Psoas muscle (tissue), 8 donors: ENCODE measurements at regions of chr20 and their contacts with region 1.

Region 1: DNA sequence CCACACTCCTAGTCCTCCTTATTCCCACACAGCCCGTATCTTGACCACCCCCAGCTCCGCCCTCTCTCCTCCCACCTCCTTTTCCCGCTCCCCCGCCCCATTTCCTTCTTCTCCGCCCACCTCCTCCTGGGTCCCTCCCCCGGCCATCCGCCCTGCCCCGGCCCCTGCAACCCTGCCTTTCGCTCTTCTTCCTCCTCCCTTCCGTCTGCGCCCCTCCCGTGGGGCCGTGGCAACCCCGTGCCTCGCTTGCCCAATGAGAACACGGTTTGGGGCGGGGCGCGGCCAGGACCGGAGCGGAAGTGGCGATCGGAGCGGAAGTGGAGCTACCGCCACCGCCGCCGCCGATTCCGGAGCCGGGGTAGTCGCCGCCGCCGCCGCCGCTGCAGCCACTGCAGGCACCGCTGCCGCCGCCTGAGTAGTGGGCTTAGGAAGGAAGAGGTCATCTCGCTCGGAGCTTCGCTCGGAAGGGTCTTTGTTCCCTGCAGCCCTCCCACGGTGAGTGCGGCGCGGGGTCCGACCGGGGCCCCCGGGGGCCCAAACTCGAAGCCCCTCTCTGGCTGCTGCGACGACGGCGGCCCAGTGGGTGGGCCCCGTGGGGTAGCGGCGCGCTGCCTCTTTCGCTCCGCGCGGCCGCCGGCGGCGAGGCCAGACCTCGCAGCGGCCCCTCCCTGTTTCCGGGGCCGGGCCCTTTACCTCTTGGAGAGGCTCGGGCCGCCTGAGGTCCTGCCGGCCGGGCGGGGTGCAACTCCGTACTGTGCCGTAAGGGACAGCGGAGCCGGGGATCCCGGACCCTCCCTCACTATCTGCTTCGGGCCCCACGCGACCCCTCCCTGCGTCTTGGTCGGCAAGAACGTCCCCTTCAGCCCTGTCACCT is at the start of gene YWHAB:
- DNase-seq: peak; percentile 99
- ATAC-seq: peak; percentile 99 to 100 (median 100)
- H3K4me3 ChIP-seq: peak within 1 kb of the TSS; percentile 83
- H3K27ac ChIP-seq: peak within 1 kb of the TSS; percentile 94
- H3K4me1 ChIP-seq: peaks cover 41% of the 10 kb centered on the region
- H3K27me3 ChIP-seq: no peaks in the 10 kb centered on the region
- CTCF ChIP-seq: no peak
- total RNA-seq, gene YWHAB: 63.2 to 92.1 (median 80.6) TPM

Region 2: DNA sequence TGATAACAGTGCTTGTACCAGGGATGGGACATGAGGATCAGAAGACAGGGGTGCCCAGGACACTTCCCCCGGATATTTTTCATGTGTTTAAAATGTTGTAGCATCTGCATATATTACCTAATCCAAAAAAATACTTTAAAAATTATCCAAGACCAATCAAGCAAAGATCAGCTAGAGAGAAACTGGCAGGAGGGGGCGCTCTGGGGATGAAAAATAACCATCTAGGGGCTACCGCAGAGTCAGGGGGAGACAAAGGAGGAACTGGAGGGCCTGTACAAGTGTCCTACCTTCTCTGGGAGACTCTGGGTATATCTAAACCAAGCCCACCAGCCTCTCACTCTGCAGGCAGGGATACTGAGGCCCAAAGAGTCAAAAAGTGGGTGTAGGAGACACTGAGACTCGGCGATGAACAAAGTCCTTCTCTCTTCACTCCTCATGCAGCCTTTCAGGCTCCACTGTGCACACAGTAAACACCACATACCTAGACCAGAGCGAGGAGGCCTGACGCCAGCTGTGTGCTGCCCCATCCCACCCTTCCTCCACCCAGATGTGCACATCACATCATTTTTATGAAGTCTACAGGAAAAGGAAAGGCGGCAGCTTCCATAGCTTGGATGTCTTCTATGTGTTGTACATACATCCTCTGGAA is 85.1 kb before region 1 on chr20:
- intact Hi-C with region 1: no loop called
- DNase-seq: no peak
- ATAC-seq: no peak
- H3K4me3 ChIP-seq: no peak overlapping the region
- H3K27ac ChIP-seq: no peak overlapping the region
- H3K4me1 ChIP-seq: peaks cover 6% of the 10 kb centered on the region
- H3K27me3 ChIP-seq: peaks cover 0 to 3% (median 2%) of the 10 kb centered on the region in 3 donors
- CTCF ChIP-seq: no peak

Region 3: GRCh38 chr20:44960103-44960852 is 74.6 kb after region 1 on chr20 and contains the start of gene TOMM34:
- intact Hi-C with region 1: loop called in 1 of 2 experiments (anchors 5 kb)
- DNase-seq: peak; percentile 96
- ATAC-seq: peak; percentile 98 to 99 (median 98)
- H3K4me3 ChIP-seq: peak within 1 kb of the TSS; percentile 99
- H3K27ac ChIP-seq: peak within 1 kb of the TSS; percentile 86
- H3K4me1 ChIP-seq: peaks cover 12% of the 10 kb centered on the region
- H3K27me3 ChIP-seq: no peaks in the 10 kb centered on the region
- CTCF ChIP-seq: peak; percentile 6
- total RNA-seq, gene TOMM34: 9.6 to 18.3 (median 14.5) TPM

Region 4: GRCh38 chr20:45322952-45323383 is 437.3 kb after region 1 on chr20:
- intact Hi-C with region 1: no loop called
- DNase-seq: peak; percentile 75 to 90
- ATAC-seq: peak; percentile 75 to 88 (median 83)
- H3K4me3 ChIP-seq: no peak overlapping the region
- H3K27ac ChIP-seq: peak overlapping the region; percentile 69
- H3K4me1 ChIP-seq: peaks cover 3% of the 10 kb centered on the region
- H3K27me3 ChIP-seq: no peaks in the 10 kb centered on the region
- CTCF ChIP-seq: peak; percentile 58